Dorsolateral prefrontal cortex (tissue), 120 donors: ENCODE measurements at regions of chr3 and their contacts with region 1.

Region 1: DNA sequence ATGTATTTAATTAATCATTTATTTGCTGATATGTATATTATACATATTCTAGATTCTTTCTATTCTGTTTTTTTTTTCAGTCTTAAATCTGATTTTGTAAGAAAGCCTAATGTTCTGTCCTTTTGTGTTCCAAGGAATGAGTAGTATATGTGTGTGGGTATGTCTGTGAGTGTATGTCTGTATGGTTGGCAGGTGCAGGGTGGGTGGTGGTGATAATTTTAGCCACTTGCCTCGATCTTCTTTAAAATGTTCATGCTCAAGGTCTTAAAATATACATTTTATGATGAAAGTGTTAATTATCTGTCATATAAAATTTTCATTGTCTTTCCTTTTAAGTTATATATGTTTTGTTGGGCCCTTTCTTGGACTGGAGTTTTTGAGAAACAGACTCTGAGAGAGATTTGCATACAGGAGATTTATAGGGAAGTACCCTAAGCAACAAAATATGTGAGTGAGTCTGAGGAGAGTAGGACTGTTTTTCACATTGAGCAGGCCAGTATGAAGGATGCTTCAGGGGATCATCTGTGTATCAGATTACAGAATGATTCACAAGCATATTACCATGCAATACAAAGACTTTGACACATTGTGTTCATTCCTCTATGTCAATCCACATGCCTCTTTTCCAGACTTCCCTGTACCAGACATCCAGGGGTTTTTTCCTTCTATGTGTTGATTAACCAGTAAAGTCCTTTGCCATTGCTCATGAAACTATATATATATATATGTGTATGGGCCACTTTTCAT is 211.0 kb upstream of the DPPA4 start:
- DNase-seq: peak in 2 of 10 donors; percentile 61 to 66
- H3K4me3 ChIP-seq: no peak overlapping the region
- H3K27ac ChIP-seq: peak overlapping the region in 38 of 59 donors; percentile 5 to 82 (median 42)
- H3K27me3 ChIP-seq: no peaks in the 10 kb centered on the region
- CTCF ChIP-seq: no peak

Region 2: GRCh38 chr3:108642526-108642925 is 905.8 kb before region 1 on chr3:
- intact Hi-C with region 1: no loop called
- DNase-seq: no peak
- H3K4me3 ChIP-seq: no peak overlapping the region
- H3K27ac ChIP-seq: no peak overlapping the region
- H3K27me3 ChIP-seq: no peaks in the 10 kb centered on the region
- CTCF ChIP-seq: no peak

Region 3: DNA sequence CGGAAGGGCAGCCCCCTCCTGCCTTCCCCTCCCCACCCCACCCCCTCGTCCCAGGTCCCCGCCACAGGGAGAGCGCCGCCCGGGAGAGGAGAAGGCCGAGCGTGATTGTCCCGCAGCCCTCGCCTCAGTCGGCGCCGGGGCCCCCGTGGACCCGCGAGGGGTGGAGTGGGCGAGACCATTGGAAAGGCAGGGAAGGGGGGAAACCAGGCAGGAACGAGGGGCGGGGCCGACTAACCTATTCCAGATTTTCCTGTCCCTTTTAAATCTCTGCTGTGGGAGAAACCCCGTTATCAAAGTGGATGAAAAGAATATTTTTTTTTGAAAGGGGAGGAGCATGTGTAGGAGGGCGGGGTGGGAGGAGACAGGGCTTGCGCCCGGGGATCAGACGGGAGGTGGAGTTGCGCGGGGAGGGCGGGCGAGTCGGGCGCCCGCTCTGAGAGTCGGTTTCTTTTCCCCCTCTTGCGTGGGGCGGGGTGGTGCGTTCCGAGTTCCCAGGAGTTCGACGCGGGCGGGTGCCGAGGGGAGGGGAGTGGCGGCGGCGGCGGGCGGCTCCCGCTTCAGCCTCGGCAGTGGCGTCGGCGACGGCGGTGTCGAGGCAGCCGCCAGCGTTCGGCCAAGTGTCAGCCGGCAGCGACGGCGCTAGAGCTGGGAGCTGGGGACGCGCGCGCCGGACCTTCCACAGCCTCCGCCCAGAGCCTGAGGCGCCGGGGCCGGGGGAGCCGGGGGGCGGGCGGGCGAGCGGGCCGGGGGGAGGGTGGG is 1523.1 kb after region 1 on chr3 and contains the start of gene NECTIN3:
- intact Hi-C with region 1: loop called in 1 of 2 experiments (anchors 10 kb)
- DNase-seq: peak; percentile 61 to 96 (median 94)
- H3K4me3 ChIP-seq: peak within 1 kb of the TSS; percentile 66 to 95 (median 86)
- H3K27ac ChIP-seq: peak within 1 kb of the TSS; percentile 75 to 97 (median 93)
- H3K27me3 ChIP-seq: no peaks in the 10 kb centered on the region
- CTCF ChIP-seq: peak in 9 of 56 donors; percentile 4 to 30 (median 9)
- total RNA-seq, gene NECTIN3: 24.6 to 52.7 (median 35.0) TPM